CD8-positive, alpha-beta T cell (primary cell): ENCODE measurements at regions of chr3 and their contacts with region 1.

Region 1: DNA sequence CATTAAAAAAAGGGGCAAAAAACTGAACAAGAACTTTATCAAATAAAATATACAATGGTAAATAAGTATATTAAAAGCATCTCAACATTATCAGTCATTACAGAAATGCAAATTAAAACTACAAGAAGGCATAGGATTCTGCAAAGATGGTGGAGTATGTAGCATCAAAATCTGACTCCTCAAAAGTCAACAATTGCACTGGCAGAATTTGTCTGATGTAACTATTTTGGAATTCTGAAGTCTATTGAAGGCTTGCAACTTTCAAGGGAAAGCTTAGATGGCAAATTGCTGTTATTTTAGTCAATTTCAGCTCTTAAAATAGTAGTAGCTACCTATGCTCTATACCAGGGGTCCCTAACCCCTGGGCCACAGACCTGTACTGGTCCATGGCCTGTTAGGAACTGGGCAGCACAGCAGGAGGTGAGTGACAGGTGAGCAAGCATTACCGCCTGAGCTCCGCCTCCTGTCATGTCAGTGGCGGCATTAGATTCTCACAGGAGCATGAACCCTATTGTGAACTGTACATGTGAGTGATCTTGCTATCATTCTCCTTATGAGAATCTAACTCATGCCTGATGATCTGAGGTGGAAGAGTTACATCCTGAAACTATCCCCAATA is 107.6 kb downstream of the TGFBR2 start:
- DNase-seq: no peak
- ATAC-seq: no peak
- H3K4me3 ChIP-seq: no peak overlapping the region
- H3K4me3 Mint-ChIP-seq: no peak overlapping the region
- H3K27ac ChIP-seq: no peak overlapping the region
- H3K27ac Mint-ChIP-seq: no peak overlapping the region
- H3K4me1 ChIP-seq: peaks cover 11% of the 10 kb centered on the region
- H3K4me1 Mint-ChIP-seq: peaks cover 12% of the 10 kb centered on the region
- H3K27me3 ChIP-seq: no peaks in the 10 kb centered on the region
- H3K27me3 Mint-ChIP-seq: no peaks in the 10 kb centered on the region
- CTCF ChIP-seq: no peak

Region 2: GRCh38 chr3:30567139-30567753 is 146.7 kb before region 1 on chr3:
- CTCF ChIA-PET with region 1: no interaction called
- POLR2A ChIA-PET with region 1: no interaction called
- intact Hi-C with region 1: no loop called
- DNase-seq: no peak
- ATAC-seq: no peak
- H3K4me3 ChIP-seq: no peak overlapping the region
- H3K4me3 Mint-ChIP-seq: no peak overlapping the region
- H3K27ac ChIP-seq: no peak overlapping the region
- H3K27ac Mint-ChIP-seq: no peak overlapping the region
- H3K4me1 ChIP-seq: no peaks in the 10 kb centered on the region
- H3K4me1 Mint-ChIP-seq: no peaks in the 10 kb centered on the region
- H3K27me3 ChIP-seq: no peaks in the 10 kb centered on the region
- H3K27me3 Mint-ChIP-seq: no peaks in the 10 kb centered on the region
- CTCF ChIP-seq: no peak

Region 3: DNA sequence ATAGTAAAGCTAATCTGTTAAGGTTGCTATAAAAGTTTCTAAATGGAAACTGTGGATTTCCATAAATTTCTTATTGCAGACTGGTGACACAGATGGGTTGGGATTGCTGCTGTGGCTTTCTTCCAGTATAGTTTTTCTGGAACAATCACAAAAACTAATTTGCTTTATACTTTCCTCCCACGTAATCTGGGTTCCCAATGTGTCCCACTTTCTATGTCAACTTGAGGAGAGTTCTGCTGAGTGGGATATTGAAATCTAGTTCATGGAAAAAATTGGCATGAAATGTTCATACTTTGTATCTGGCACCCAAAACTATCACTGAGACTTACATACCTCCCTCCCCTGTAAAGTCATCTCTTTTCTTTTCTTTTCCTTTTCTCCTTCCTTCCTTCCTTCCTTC is 19.2 kb after region 1 on chr3:
- CTCF ChIA-PET with region 1: no interaction called
- POLR2A ChIA-PET with region 1: interaction called, 4 read pairs
- intact Hi-C with region 1: loop called in 1 of 2 experiments (anchors 2 kb)
- DNase-seq: no peak
- ATAC-seq: no peak
- H3K4me3 ChIP-seq: no peak overlapping the region
- H3K4me3 Mint-ChIP-seq: no peak overlapping the region
- H3K27ac ChIP-seq: no peak overlapping the region
- H3K27ac Mint-ChIP-seq: no peak overlapping the region
- H3K4me1 ChIP-seq: peaks cover 37% of the 10 kb centered on the region
- H3K4me1 Mint-ChIP-seq: peaks cover 57% of the 10 kb centered on the region
- H3K27me3 ChIP-seq: no peaks in the 10 kb centered on the region
- H3K27me3 Mint-ChIP-seq: no peaks in the 10 kb centered on the region
- CTCF ChIP-seq: no peak